Activated CD4-positive, alpha-beta T cell treated with anti-CD3 and anti-CD28 coated beads for 36 hours (primary cell): ENCODE measurements at regions of chr18 and their contacts with region 1.

Region 1: DNA sequence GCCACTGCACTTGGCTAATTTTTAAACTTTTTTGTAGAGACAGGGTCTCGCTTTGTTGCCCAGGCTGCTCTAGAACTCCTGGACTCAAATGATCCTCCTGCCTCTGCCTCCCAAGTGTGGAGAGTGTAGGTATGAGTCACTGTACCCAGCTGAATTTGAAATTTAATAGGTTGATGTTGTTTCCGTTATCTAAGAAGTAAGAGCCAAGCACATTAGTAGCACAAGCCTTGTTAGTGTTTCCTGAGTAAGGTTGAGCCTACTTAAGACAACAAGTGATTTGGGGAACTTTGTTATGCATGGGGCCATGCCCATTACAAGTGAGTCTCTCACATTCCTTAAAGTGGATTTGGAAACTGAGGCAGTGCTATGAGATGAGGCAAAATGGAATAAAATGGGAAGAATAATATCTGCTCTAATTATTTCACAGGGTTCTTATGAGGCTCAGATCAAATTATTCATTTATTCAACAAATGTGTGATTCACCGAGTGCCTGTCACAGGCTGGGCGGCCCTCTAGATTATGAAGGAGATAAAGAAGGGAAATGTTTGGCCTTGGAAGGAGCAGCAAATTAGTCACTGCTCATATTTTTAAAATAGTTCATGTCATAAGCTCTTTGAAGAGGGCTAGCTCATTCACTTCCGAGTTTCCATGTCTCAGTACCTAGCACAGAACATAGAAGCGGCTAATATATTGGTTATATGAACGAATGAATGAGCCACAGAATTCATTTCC is 217.2 kb downstream of the LDLRAD4 start:
- DNase-seq: peak; percentile 23
- ATAC-seq: no peak
- H3K4me3 Mint-ChIP-seq: no peak overlapping the region
- H3K27ac Mint-ChIP-seq: peak overlapping the region; percentile 86
- H3K4me1 Mint-ChIP-seq: peaks cover 67% of the 10 kb centered on the region
- H3K27me3 Mint-ChIP-seq: no peaks in the 10 kb centered on the region

Region 2: DNA sequence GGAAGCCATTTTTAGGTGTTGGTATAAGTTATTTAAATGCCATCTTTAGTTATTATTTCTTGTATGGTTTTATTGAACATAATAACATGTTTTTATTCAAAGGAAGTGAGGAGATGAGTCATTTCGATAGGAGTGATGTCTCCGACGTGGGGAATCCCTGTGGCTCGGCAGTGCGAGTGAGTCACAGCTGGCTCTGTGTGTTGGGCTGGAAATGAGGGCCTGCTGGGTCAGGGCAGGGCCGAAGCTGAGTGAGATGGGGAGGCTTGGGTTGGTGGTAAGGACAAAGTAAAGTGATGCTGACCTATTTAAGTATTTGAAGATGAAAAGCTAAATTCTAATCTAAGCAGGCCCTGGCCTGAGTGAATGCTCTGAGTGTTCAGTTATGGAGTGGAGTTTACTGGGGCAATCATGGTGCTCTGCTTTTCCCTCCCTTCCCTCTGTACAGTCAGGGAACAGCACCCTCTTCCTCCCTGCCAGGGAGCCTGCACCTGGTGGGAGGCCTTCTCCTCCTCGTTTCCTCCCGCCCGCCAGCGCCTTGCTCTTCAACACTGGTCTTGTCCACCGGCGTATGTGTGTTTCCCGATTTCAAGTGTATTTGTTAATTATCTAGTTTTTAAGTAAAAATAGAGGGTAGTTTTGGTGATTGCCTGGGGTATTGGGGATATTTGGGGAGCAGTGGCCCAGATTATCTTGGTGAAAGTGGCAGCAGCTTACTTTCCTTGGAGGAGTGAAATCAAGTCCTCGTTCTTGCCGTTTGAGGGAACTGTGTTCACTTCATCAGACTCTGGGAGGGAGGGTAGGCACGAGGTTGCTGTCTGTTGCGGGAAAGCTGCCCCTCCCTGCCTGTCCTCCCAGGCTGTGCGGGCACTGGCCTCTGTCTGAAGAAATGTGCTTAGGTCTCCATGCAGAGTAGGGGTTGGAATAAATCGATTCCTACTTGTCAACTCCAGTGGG is 60.2 kb before region 1 on chr18:
- CTCF ChIA-PET with region 1: no interaction called
- POLR2A ChIA-PET with region 1: interaction called, 5 read pairs
- intact Hi-C with region 1: loop called (anchors 2 kb)
- DNase-seq: peak; percentile 91
- ATAC-seq: peak; percentile 73
- H3K4me3 Mint-ChIP-seq: peak overlapping the region; percentile 63
- H3K27ac Mint-ChIP-seq: peak overlapping the region; percentile 97
- H3K4me1 Mint-ChIP-seq: peaks cover 84% of the 10 kb centered on the region
- H3K27me3 Mint-ChIP-seq: no peaks in the 10 kb centered on the region

Region 3: GRCh38 chr18:13416208-13416607 is 19.6 kb before region 1 on chr18:
- CTCF ChIA-PET with region 1: no interaction called
- POLR2A ChIA-PET with region 1: no interaction called
- intact Hi-C with region 1: loop called in 1 of 2 experiments (anchors 2 kb)
- DNase-seq: peak; percentile 33
- ATAC-seq: peak; percentile 83
- H3K4me3 Mint-ChIP-seq: no peak overlapping the region
- H3K27ac Mint-ChIP-seq: peak overlapping the region; percentile 15
- H3K4me1 Mint-ChIP-seq: peaks cover 16% of the 10 kb centered on the region
- H3K27me3 Mint-ChIP-seq: no peaks in the 10 kb centered on the region

Region 4: GRCh38 chr18:13541621-13542519 is 106.1 kb after region 1 on chr18:
- CTCF ChIA-PET with region 1: no interaction called
- POLR2A ChIA-PET with region 1: no interaction called
- intact Hi-C with region 1: no loop called
- DNase-seq: no peak
- ATAC-seq: no peak
- H3K4me3 Mint-ChIP-seq: no peak overlapping the region
- H3K27ac Mint-ChIP-seq: no peak overlapping the region
- H3K4me1 Mint-ChIP-seq: peaks cover 43% of the 10 kb centered on the region
- H3K27me3 Mint-ChIP-seq: no peaks in the 10 kb centered on the region

Region 5: DNA sequence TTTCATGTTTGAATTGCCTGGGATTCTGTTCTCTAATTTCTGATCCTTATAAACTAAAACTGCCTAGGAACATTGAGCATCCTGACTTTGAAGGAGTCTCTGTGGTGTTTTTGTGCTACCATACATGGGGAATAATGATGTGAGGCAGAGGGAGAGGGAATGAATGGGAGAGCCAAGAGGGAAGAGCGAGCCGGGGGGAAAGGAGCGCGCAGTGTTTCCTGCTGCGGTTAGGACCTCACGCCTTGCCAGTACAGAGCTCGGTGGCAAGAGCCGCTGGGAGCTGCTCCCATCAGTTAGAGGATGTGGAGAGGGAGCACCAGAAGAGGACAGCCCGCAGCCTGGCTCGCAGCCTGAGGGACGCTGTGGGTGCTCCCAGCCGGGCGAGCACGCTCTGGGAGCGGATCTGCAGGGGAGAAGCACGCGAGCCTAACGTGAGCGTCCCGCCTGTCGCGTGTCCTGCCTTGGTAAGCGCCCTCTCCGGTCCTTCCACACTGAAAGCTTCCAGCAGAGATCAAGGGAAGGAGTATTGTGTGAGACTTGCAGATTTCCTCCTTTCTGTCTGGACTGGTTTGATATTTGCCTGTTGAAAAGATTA is 175.9 kb after region 1 on chr18:
- CTCF ChIA-PET with region 1: no interaction called
- POLR2A ChIA-PET with region 1: interaction called, 3 read pairs
- intact Hi-C with region 1: loop called in 1 of 2 experiments (anchors 10 kb)
- DNase-seq: peak; percentile 46
- ATAC-seq: peak; percentile 4
- H3K4me3 Mint-ChIP-seq: peak overlapping the region; percentile 72
- H3K27ac Mint-ChIP-seq: peak overlapping the region; percentile 87
- H3K4me1 Mint-ChIP-seq: peaks cover 84% of the 10 kb centered on the region
- H3K27me3 Mint-ChIP-seq: no peaks in the 10 kb centered on the region